ENCODE measurements at regions of chr11 and their contacts with region 1.

Region 1: GRCh38 chr11:32141745-32142546 is 51.1 kb downstream of the RCN1 start:
- DNase-seq: peak in 1 of 2 donors; percentile 25
- ATAC-seq: peak; percentile 69 to 83 (median 72)
- H3K4me3 ChIP-seq: no peak overlapping the region
- H3K4me3 Mint-ChIP-seq: peak overlapping the region; percentile 83
- H3K27ac ChIP-seq: no peak overlapping the region
- H3K27ac Mint-ChIP-seq: peak overlapping the region; percentile 61 to 75
- H3K4me1 ChIP-seq: peaks cover 23% of the 10 kb centered on the region
- H3K4me1 Mint-ChIP-seq: peaks cover 21 to 32% of the 10 kb centered on the region in 2 donors
- H3K27me3 ChIP-seq: no peaks in the 10 kb centered on the region
- H3K27me3 Mint-ChIP-seq: no peaks in the 10 kb centered on the region
- CTCF ChIP-seq: no peak

Region 2: GRCh38 chr11:31442086-31442485 is 699.9 kb before region 1 on chr11:
- intact Hi-C with region 1: no loop called
- DNase-seq: no peak
- ATAC-seq: no peak
- H3K4me3 ChIP-seq: no peak overlapping the region
- H3K4me3 Mint-ChIP-seq: no peak overlapping the region
- H3K27ac ChIP-seq: no peak overlapping the region
- H3K27ac Mint-ChIP-seq: no peak overlapping the region
- H3K4me1 ChIP-seq: no peaks in the 10 kb centered on the region
- H3K4me1 Mint-ChIP-seq: peaks cover 0 to 12% of the 10 kb centered on the region in 2 donors
- H3K27me3 ChIP-seq: no peaks in the 10 kb centered on the region
- H3K27me3 Mint-ChIP-seq: no peaks in the 10 kb centered on the region
- CTCF ChIP-seq: no peak

Region 3: GRCh38 chr11:32105871-32106560 is 35.9 kb before region 1 on chr11:
- intact Hi-C with region 1: loop called (anchors 5 kb)
- DNase-seq: no peak
- ATAC-seq: no peak
- H3K4me3 ChIP-seq: no peak overlapping the region
- H3K4me3 Mint-ChIP-seq: no peak overlapping the region
- H3K27ac ChIP-seq: no peak overlapping the region
- H3K27ac Mint-ChIP-seq: no peak overlapping the region
- H3K4me1 ChIP-seq: no peaks in the 10 kb centered on the region
- H3K4me1 Mint-ChIP-seq: no peaks in the 10 kb centered on the region
- H3K27me3 ChIP-seq: no peaks in the 10 kb centered on the region
- H3K27me3 Mint-ChIP-seq: no peaks in the 10 kb centered on the region
- CTCF ChIP-seq: no peak

Region 4: DNA sequence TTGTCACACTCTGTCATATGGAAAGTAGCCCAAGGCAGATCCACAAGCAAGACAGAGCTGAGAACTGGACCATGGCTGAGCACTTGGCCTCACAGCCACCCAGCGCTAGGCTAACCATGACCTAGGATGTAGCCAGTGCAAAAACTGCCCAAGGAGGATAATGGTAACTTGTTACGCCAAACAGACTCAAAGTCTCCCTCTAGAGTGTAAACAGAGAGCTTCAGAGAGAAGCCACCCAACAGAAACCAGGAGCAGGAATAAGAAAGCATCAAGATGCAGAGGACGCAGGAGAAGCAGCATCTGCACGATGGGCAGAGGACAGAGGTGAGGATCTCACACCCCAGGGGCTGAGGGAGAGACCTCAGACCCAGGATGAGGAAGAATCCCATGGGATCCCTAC is 46.8 kb after region 1 on chr11:
- intact Hi-C with region 1: no loop called
- DNase-seq: no peak
- ATAC-seq: no peak
- H3K4me3 ChIP-seq: no peak overlapping the region
- H3K4me3 Mint-ChIP-seq: no peak overlapping the region
- H3K27ac ChIP-seq: no peak overlapping the region
- H3K27ac Mint-ChIP-seq: no peak overlapping the region
- H3K4me1 ChIP-seq: no peaks in the 10 kb centered on the region
- H3K4me1 Mint-ChIP-seq: no peaks in the 10 kb centered on the region
- H3K27me3 ChIP-seq: no peaks in the 10 kb centered on the region
- H3K27me3 Mint-ChIP-seq: peaks cover 0 to 14% of the 10 kb centered on the region in 2 donors
- CTCF ChIP-seq: no peak